ENCODE measurements at regions of chr12 and their contacts with region 1.

Region 1: DNA sequence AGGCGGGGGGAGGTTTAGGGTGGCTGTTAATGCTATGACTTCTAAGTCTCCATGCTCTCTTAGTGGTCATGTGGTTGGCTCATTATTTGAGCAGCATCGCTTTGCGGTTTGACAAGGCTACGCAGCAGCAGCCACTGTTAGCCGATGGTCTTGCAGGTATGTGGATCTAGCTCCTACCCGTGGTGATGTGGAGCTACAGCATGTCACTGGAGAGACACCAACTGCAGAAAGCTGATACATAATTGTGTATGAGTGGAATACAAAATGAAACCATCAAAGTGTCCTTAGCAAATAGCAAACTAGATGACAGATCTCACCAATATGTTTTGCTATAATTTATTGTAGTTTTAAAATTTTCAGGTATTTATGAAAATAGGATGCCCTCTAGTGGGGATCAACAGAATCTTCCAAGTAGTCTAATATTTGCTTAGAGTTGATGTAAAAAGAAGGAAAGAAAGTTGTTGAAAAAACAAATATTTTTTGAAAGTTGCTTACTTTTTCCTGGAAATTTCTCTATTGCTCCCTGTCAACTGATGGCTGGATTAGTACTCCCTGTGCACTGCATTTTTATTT is 94.9 kb downstream of the NAV3 start:
- DNase-seq: peak; percentile 91 to 99
- H3K4me3 ChIP-seq: no peak overlapping the region
- H3K4me1 ChIP-seq: peaks cover 22% of the 10 kb centered on the region
- H3K27me3 ChIP-seq: no peaks in the 10 kb centered on the region

Region 2: GRCh38 chr12:77724367-77724957 is 201.2 kb before region 1 on chr12:
- in situ Hi-C with region 1: loop called (anchors 5 kb)
- DNase-seq: peak; percentile 35 to 65
- H3K4me3 ChIP-seq: no peak overlapping the region
- H3K4me1 ChIP-seq: peaks cover 7% of the 10 kb centered on the region
- H3K27me3 ChIP-seq: no peaks in the 10 kb centered on the region